Mammary epithelial cell (primary cell): ENCODE measurements at regions of chr3 and their contacts with region 1.

Region 1: GRCh38 chr3:99016452-99016851 is 115.0 kb upstream of the DCBLD2 start:
- DNase-seq: no peak
- H3K4me3 ChIP-seq: no peak overlapping the region
- H3K27ac ChIP-seq: no peak overlapping the region
- H3K4me1 ChIP-seq: no peaks in the 10 kb centered on the region
- H3K27me3 ChIP-seq: no peaks in the 10 kb centered on the region
- CTCF ChIP-seq: no peak

Region 2: DNA sequence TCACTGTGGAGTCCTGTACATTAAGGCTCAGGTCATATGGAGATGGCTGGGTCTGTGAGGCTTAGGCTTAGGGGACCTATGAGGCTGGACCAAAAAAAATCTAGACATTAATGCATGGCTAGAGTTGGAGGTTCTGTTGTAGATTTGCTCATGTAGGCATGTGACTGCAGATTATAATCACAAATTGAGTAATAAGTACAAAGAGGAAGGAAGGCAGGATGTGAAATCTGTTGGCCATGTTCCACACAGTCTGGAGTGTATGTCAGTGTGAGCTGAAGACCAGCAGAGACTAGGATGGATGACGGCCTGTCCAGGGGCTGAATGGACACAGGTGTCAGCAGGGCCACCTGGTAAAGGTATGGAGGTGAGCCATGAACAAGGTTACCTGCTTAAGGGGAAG is 253.4 kb before region 1 on chr3 and contains the start of gene ST3GAL6:
- CTCF ChIA-PET with region 1: no interaction called
- dilution Hi-C with region 1: no loop called
- in situ Hi-C with region 1: no loop called
- intact Hi-C with region 1: no loop called
- DNase-seq: peak; percentile 43
- H3K4me3 ChIP-seq: no peak within 1 kb of the TSS
- H3K27ac ChIP-seq: no peak within 1 kb of the TSS
- H3K4me1 ChIP-seq: peaks cover 7% of the 10 kb centered on the region
- H3K27me3 ChIP-seq: no peaks in the 10 kb centered on the region
- CTCF ChIP-seq: no peak
- total RNA-seq, gene ST3GAL6: 5.8 to 7.0 TPM

Region 3: DNA sequence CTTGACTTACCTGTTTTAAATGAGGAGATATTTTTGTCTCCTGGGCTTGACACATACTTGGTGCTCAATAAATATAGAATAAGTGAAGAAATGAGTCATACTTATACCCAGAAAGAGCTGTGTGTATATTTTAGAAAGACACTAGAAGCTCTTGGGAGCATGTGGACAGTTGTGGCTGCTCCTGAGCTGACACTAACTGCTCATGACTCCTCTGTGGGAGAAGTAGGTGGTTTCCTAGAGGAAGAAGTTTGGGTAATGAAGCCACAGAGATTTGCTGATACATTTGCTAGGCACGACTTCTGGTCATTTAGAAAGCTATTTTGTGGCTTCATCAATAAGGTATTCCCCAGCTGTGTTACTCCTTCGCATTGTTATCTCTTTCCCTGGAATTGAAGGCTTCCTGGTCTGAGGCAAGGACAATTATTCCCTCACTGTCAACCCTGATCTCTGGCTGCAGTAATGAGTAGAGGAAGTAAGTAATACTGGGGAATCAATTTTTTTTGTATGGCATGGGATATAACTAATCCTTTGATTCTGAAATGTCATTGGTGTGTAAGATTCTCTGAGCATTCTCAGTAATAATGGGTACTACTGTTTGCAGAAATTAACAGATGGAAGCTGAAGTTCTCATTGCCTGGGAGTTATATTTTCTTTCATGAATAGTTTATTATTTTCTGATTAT is 35.4 kb before region 1 on chr3:
- CTCF ChIA-PET with region 1: no interaction called
- dilution Hi-C with region 1: no loop called
- in situ Hi-C with region 1: no loop called
- intact Hi-C with region 1: no loop called
- DNase-seq: peak; percentile 93
- H3K4me3 ChIP-seq: peak overlapping the region; percentile 34 to 83 (median 73)
- H3K27ac ChIP-seq: peak overlapping the region; percentile 81
- H3K4me1 ChIP-seq: peaks cover 45% of the 10 kb centered on the region
- H3K27me3 ChIP-seq: no peaks in the 10 kb centered on the region
- CTCF ChIP-seq: no peak

Region 4: GRCh38 chr3:99066863-99067262 is 50.4 kb after region 1 on chr3:
- CTCF ChIA-PET with region 1: no interaction called
- dilution Hi-C with region 1: loop called (anchors 5 kb)
- in situ Hi-C with region 1: no loop called
- intact Hi-C with region 1: no loop called
- DNase-seq: no peak
- H3K4me3 ChIP-seq: no peak overlapping the region
- H3K27ac ChIP-seq: no peak overlapping the region
- H3K4me1 ChIP-seq: no peaks in the 10 kb centered on the region
- H3K27me3 ChIP-seq: no peaks in the 10 kb centered on the region
- CTCF ChIP-seq: no peak

Region 5: GRCh38 chr3:99186016-99186415 is 169.6 kb after region 1 on chr3:
- CTCF ChIA-PET with region 1: no interaction called
- dilution Hi-C with region 1: no loop called
- in situ Hi-C with region 1: no loop called
- intact Hi-C with region 1: no loop called
- DNase-seq: no peak
- H3K4me3 ChIP-seq: no peak overlapping the region
- H3K27ac ChIP-seq: no peak overlapping the region
- H3K4me1 ChIP-seq: peaks cover 2% of the 10 kb centered on the region
- H3K27me3 ChIP-seq: no peaks in the 10 kb centered on the region
- CTCF ChIP-seq: no peak